ENCODE measurements at regions of chr20 and their contacts with region 1.

Region 1: DNA sequence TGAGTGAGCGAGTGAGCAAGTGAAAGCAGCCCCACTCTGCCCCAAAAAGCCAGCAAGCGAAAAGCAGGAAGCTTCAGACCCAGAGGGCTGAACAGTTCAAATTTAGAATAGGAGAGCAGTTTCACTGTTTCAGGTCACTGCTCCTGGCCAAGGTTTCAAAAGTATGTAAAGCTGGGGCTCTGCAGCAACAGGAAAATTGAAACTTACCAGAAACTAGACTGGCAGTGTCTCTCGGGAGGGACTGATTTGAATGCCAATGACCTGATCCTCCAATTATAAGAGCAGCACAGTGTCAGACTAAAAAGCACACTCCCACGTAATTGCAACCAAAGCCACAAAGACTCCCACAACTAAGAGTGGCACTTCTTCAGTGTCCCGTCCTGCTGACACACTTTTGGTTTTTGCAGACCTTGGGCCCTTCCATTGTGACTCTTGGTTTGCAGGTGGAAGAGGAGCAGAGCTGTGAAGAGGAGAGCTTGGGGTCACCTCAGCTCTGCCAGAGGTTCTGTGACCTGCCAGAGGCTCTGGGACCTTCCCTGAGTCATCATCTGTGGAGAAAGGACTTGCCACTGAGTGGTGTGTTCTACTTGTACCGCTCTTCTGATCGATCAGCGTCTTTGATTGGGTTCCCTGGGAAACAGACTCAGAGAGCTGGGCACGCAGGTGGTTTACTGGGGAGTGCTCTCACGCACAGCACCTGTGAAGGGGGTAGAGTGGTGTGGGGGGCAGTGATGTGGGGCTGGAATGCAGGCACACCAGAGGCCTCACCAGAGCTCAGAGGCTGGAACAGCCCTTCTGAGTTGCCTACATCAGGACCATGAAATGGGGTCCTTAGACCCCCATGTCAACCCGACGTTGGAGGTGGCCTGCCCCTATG is 52.7 kb upstream of the PTGIS start:
- DNase-seq: no peak
- H3K4me3 ChIP-seq: no peak overlapping the region
- H3K27ac ChIP-seq: no peak overlapping the region
- H3K4me1 ChIP-seq: peaks cover 0 to 17% (median 8%) of the 10 kb centered on the region in 4 donors
- H3K27me3 ChIP-seq: no peaks in the 10 kb centered on the region
- CTCF ChIP-seq: no peak
- EP300 ChIP-seq: no peak
- POLR2A ChIP-seq: no peak

Region 2: DNA sequence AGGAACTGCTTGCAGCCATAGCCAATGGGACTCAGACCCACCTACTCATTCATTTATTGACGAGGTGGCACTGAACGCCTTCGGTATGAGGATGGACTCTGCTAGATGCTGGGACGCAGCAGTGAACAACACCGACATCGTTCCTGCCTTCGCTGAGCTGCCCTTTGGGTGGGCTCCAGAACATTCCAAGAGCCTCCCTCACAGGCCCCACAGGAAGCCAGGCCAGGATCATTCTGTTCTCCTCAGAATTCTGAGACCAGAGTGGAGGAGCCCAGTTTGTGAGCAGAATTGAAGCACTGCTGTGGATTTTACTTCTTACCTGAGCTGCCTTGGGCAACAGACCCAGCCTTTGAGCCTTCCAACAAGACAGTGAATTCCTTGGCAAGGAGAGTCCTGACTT is 220.2 kb before region 1 on chr20:
- intact Hi-C with region 1: no loop called
- DNase-seq: peak in 1 of 2 donors; percentile 44
- H3K4me3 ChIP-seq: no peak overlapping the region
- H3K27ac ChIP-seq: peak overlapping the region in 4 of 5 donors; percentile 70 to 86 (median 77)
- H3K4me1 ChIP-seq: peaks cover 0 to 74% (median 24%) of the 10 kb centered on the region in 4 donors
- H3K27me3 ChIP-seq: no peaks in the 10 kb centered on the region
- CTCF ChIP-seq: no peak
- EP300 ChIP-seq: peak; percentile 41
- POLR2A ChIP-seq: no peak

Region 3: DNA sequence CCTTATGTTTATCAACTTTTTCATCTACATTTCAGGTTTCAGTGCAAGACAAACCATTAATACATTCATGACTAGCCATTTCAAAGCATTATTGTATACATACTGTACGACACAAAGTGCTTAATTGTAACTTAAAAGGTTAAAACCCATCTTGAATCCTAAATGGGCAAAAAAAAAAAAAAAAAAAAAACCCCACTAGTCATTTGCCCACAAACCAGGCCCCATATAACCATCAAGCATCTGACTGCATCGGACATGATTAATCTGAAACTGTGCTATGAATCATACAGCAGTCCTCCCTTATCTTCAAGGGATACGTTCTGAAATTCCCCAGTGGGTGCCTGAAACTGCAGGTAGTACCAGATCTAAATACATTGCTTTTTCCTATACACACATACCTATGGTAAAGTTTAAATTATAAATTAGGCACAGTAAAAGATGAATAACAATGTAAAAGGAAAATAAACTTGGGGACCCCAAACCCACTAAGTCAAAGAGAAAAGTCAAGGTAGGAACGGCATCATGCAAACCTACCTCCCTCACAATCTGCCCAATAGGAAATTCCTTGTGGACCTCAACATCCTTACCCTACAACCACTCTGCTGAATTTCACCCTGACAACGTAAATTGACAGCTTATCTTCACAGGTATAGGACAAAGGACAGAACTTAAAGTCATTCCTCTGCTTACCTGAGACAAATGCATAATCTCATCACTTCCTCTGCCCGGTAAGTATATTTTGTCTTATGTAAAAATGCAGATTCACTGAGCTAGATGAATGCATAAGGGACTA is 78.8 kb after region 1 on chr20:
- intact Hi-C with region 1: loop called (anchors 10 kb)
- DNase-seq: no peak
- H3K4me3 ChIP-seq: no peak overlapping the region
- H3K27ac ChIP-seq: peak overlapping the region in 1 of 5 donors; percentile 10
- H3K4me1 ChIP-seq: peaks cover 25 to 97% (median 72%) of the 10 kb centered on the region in 4 donors
- H3K27me3 ChIP-seq: no peaks in the 10 kb centered on the region
- CTCF ChIP-seq: no peak
- EP300 ChIP-seq: no peak
- POLR2A ChIP-seq: no peak